ENCODE measurements at regions of chr17 and their contacts with region 1.

Region 1: DNA sequence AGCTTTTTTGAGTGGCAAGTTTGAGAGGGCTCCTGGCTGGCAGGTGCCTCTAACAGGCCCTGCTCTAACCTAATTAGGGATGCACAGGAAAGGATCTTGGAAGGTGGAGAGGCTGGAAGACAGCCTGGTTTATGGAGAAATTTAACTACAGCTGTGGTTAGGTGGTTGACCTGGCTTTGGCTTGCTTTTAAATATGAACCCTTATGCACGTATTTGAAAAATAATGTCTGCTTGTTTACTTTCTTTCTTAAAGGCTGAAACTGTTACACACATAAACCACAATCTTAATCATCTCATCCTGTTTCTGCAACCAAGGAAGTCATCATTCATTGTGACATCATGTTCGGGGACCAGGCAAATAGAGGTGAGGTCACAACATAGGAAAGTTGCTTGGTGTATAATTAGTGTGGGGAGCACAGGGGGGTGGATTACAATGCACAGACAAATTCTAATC is 23.1 kb upstream of the DHRS13 start:
- DNase-seq: peak; percentile 88
- H3K4me3 ChIP-seq: peak overlapping the region in 1 of 3 experiments; percentile 57
- H3K27ac ChIP-seq: peak overlapping the region; percentile 89
- H3K4me1 ChIP-seq: peaks cover 22% of the 10 kb centered on the region
- H3K27me3 ChIP-seq: no peaks in the 10 kb centered on the region
- CTCF ChIP-seq: no peak
- POLR2A ChIP-seq: no peak

Region 2: DNA sequence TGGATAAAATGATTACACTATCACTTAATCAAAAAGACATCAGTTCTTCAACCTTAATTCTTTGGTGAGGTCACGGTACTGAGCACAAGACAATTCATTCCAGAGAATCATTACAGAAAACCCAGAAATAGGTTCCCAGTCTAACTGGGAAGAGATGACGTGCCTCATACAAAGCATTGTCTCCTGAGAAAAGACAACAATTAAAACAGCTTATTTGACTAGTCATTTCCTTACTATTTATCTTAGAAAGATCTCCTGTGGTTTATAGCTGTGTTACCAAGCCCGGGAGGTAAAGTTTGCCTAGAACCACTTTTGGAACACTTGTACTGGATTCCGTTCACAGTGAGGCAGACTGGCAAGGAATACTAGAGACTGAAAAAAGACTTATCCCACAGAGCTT is 20.3 kb after region 1 on chr17:
- CTCF ChIA-PET with region 1: interaction called, 28 read pairs
- POLR2A ChIA-PET with region 1: no interaction called
- dilution Hi-C with region 1: no loop called
- intact Hi-C with region 1: loop called (anchors 1 kb)
- DNase-seq: peak; percentile 88
- H3K4me3 ChIP-seq: no peak overlapping the region
- H3K27ac ChIP-seq: peak overlapping the region; percentile 94
- H3K4me1 ChIP-seq: peaks cover 34% of the 10 kb centered on the region
- H3K27me3 ChIP-seq: no peaks in the 10 kb centered on the region
- CTCF ChIP-seq: no peak
- POLR2A ChIP-seq: no peak

Region 3: GRCh38 chr17:29225396-29225795 is 299.5 kb after region 1 on chr17:
- CTCF ChIA-PET with region 1: no interaction called
- POLR2A ChIA-PET with region 1: no interaction called
- dilution Hi-C with region 1: no loop called
- intact Hi-C with region 1: no loop called
- DNase-seq: no peak
- H3K4me3 ChIP-seq: no peak overlapping the region
- H3K27ac ChIP-seq: no peak overlapping the region
- H3K4me1 ChIP-seq: no peaks in the 10 kb centered on the region
- H3K27me3 ChIP-seq: no peaks in the 10 kb centered on the region
- CTCF ChIP-seq: no peak
- POLR2A ChIP-seq: no peak

Measured in endothelial cell of umbilical vein (primary cell).